Right ventricle myocardium inferior (tissue), 1 donor: ENCODE measurements at regions of chr10 and their contacts with region 1.

Region 1: DNA sequence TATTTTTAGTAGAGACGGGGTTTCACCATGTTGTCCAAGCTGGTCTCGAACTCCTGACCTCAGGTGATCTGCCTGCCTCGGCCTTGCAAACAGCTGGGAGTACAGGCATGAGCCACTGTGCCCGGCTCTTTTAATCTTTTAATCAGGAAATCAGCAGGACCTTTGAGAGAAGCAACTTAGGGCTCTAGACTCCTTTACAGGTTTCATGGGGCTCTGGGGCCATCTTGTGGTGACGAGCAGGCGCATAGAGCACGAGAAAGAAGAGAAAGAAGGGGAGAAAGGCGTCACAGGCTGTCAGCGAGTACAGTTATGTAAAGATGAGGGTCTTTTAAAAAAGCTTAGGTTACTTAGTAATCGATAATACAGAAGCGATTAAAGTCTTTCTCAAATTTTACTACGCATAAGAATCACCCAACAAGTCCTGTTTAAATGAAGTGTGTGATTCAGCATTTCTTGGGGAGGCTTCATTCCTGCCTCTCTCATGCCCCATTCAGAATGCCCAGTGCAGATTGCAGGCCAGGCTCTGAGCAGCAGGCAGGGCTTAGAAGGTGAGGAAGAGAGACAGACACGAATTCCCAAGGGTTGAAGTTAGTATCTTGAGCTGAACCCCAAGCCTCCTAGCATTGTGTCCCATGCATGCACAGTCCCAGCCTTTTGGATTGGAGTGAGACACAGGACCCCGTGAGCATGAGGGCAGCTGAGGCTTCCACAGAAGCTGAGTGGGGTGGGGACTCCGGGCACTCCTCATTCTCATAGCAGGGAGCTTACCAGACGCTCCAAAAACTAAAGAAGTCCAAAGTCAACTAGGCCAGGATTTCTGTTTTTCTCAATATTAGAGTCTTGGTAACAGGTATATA is 23.6 kb upstream of the PFKP start:
- DNase-seq: no peak
- ATAC-seq: peak; percentile 79

Region 2: DNA sequence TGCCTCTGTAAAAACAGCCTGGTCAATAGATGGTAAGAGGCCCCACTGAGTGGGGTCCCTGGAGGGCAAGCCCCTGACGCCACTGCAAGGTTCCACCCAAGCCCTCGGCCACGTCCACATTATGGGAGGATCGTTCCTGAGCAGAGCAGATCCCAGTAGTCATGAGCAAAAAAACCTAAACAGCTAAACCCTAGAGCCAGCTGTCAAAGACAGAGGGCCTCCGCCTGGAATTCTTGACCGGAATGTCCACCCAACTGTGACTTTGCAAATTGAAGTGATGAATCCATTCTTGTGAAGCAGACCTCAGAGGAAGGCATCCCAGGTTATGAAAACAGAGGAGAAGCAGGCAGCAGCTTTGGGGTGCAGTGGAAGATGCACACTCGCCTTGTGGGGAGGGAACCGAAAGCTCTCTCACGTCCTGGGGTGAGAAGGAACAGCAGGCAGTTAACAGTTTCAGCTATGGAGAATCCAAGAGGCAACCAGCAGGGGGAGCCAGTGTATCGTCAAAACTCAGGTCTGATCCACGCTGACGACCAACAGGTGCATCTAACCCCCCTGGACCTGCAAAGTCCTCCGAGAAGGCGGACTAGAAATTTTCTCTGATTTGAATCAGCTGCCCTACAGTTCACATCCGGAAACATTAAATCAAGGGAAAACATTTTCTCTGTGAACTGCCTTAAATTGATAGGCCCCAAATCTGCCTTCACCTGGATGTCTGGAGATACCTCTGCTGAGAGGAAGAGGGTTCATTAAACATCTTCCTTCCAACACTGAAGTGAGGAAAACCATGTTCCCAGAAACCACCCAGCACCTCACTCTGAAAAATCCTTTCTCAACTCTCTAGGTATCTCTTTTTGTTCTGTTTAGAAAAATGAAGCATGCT is 115.5 kb before region 1 on chr10:
- intact Hi-C with region 1: loop called (anchors 5 kb)
- DNase-seq: no peak
- ATAC-seq: peak; percentile 69